Mammary epithelial cell (primary cell): ENCODE measurements at regions of chr16 and their contacts with region 1.

Region 1: DNA sequence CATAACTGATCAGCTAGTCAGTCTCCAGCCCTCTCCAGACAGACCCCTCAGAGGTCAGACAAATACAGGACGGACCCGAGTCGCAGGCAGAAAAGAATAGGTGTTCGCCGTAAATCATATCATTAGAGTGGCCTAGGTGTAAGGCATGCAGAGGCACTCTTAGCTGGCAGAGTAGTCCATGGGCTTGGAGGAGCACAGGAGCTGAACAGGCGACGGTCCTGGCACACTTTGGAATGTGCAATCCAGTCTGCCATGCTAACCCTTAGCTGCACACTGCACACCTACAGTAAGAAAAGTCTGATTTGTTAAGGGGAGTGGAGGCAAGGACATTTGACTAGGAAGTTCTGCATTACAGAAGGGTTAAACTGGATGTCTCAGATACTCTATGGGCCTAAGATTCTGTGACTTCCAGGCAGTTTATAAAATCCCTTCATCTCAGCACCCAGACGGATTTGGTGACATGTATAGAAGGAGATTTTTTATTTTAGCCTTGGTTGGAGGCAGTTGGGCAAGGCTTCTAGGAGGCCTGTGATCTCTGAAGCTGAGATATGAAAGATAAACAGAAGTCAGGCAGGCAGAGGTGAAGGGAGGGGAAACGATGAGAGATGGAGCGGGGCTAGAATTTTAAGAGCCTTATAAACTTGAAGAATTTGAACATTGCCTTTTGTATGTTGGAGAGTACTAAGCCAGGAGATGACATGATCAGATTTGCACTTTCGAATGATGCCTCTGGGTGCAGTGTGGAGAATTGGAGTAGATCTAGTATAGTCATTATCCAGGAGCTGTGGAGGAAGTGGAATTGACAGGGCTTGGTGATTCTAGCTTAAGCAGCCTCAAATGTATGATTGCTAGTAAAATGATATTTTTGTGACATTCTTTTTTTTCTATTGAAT is 34.6 kb upstream of the SLC5A11 start:
- DNase-seq: no peak
- H3K4me3 ChIP-seq: no peak overlapping the region
- H3K27ac ChIP-seq: no peak overlapping the region
- H3K4me1 ChIP-seq: no peaks in the 10 kb centered on the region
- H3K27me3 ChIP-seq: no peaks in the 10 kb centered on the region
- CTCF ChIP-seq: no peak

Region 2: DNA sequence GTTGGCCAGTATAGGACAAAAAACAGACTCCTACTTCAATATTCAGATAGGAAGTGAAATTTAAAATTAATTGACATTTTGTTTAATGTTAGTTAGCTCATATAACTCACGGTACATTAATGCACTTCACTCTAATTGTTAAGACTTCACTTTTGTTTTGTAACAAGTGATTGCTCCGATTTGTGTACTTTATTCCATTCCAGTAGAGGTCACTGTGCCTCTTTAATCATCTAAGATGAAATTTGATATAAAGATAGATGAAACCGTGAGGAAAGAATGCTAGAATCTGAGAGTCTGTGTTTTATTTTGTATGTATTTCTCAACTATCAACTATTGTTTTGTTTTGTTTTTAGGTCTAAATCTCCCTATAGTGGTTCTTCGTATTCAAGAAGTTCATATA is 242.8 kb before region 1 on chr16:
- CTCF ChIA-PET with region 1: no interaction called
- dilution Hi-C with region 1: no loop called
- in situ Hi-C with region 1: loop called (anchors 10 kb)
- intact Hi-C with region 1: no loop called
- DNase-seq: peak; percentile 8
- H3K4me3 ChIP-seq: no peak overlapping the region
- H3K27ac ChIP-seq: no peak overlapping the region
- H3K4me1 ChIP-seq: no peaks in the 10 kb centered on the region
- H3K27me3 ChIP-seq: no peaks in the 10 kb centered on the region
- CTCF ChIP-seq: peak; percentile 21 to 37

Region 3: DNA sequence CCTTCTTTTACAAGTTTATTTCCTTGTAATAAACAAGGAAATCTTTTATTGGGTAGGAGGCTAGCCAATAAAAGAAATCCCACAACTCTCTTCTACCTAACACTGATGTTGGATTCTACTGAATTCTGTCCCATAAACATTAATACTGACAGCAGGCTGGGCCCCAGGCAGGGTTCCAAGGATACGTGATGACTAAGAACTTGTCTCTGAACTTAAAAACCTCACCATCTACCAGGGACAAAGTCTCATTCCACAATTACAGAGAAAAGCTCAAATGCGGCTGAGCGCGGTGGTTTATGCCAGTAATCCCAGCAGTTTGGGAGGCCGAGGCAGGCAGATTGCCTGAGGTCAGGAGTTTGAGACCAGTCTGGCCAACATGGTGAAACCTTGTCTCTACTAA is 139.1 kb after region 1 on chr16:
- CTCF ChIA-PET with region 1: no interaction called
- dilution Hi-C with region 1: no loop called
- in situ Hi-C with region 1: no loop called
- intact Hi-C with region 1: no loop called
- DNase-seq: no peak
- H3K4me3 ChIP-seq: no peak overlapping the region
- H3K27ac ChIP-seq: no peak overlapping the region
- H3K4me1 ChIP-seq: no peaks in the 10 kb centered on the region
- H3K27me3 ChIP-seq: no peaks in the 10 kb centered on the region
- CTCF ChIP-seq: no peak